ENCODE measurements at regions of chr6 and their contacts with region 1.

Region 1: DNA sequence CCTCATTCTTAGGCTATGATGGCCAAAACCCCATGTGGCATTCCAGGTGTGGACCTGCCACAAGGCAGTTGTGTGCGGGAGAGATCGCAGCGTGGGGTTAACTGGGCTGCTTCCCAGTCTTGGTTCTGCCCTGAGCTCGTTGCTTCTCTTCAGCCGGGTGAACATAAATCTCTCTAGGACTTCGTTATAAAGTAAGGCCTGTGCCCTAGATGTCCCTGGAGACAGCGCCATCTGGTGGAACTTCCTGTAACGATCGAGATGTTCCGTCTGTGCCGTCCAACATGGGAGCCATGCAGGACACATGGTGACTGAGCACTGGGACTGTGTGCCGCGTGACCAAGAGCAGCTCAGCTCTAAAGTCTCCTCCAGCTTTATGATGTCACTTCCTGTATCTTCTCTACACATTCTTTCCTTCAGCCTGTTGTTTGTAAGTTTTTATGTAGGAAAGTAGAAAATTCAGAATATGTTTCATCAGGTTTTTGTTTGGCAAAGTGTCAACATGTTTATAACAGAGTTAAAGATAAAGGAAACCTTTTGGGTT is 26.8 kb upstream of the RPP40 start:
- H3K4me3 ChIP-seq: no peak overlapping the region
- H3K27ac ChIP-seq: no peak overlapping the region
- H3K4me1 ChIP-seq: peaks cover 3% of the 10 kb centered on the region; the same call in 1 of the 2 replicates
- CTCF ChIP-seq: 0 out of 2 replicates have a peak, but pooled peaks have one; percentile 38

Region 2: GRCh38 chr6:4314201-4314707 is 716.4 kb before region 1 on chr6:
- CTCF ChIA-PET with region 1: interaction called, 10 read pairs
- POLR2A ChIA-PET with region 1: no interaction called
- H3K4me3 ChIP-seq: no peak overlapping the region
- H3K27ac ChIP-seq: no peak overlapping the region
- H3K4me1 ChIP-seq: 0 out of 2 replicates have a peak, but pooled peaks cover under 1% of the 10 kb centered on the region
- CTCF ChIP-seq: no peak

Region 3: DNA sequence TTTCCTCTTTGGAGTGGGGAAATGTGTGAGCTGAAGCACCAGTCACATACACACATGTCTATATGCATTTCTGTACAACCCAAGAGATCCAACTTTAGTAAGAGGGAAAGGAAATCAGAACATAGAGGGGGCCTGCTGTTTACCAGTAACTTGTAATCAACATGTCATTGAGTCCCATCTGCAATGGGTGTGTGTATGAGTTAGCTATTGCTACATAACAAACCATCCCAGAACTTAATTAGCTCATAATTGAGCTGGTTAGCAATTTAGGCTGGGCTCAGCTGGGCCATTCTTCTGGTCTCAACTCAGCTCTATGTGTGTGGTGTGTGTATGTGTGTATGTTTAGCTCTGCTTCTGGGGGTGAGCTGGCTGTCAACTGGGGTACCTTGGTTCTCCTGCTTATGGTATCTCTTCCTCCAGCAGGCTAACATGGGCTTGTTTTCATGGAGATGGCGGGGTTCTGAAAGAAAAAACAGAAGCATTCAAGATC is 16.5 kb before region 1 on chr6:
- CTCF ChIA-PET with region 1: interaction called, 24 read pairs
- POLR2A ChIA-PET with region 1: no interaction called
- H3K4me3 ChIP-seq: no peak overlapping the region
- H3K27ac ChIP-seq: no peak overlapping the region
- H3K4me1 ChIP-seq: no peaks in the 10 kb centered on the region
- CTCF ChIP-seq: no peak

Region 4: GRCh38 chr6:5020142-5020541 is 10.5 kb before region 1 on chr6:
- CTCF ChIA-PET with region 1: interaction called, 24 read pairs
- POLR2A ChIA-PET with region 1: no interaction called
- H3K4me3 ChIP-seq: no peak overlapping the region
- H3K27ac ChIP-seq: no peak overlapping the region
- H3K4me1 ChIP-seq: no peaks in the 10 kb centered on the region
- CTCF ChIP-seq: no peak

Region 5: GRCh38 chr6:5041955-5042354 is 11.3 kb after region 1 on chr6:
- CTCF ChIA-PET with region 1: interaction called, 39 read pairs
- POLR2A ChIA-PET with region 1: no interaction called
- H3K4me3 ChIP-seq: no peak overlapping the region
- H3K27ac ChIP-seq: no peak overlapping the region
- H3K4me1 ChIP-seq: no peaks in the 10 kb centered on the region
- CTCF ChIP-seq: no peak

Region 6: DNA sequence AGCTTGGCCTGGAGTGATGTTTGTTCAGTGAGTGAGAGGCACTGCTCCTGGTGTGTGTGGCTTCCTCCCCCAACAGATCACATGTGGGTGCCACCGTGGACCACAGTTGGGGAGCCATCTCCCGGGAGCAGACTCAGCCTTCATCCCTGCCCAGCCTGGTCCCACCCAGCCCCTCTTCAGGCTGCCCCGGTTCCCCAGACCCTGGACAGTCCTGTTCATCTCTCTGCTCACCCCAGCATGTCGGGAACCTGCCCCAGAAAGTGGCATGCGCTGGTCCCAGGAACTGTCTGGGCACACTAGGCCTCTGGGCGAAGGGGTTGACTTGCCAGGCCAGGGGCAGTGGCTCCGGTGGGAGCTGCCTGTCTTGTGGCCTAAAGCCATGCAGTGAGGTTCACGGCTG is 33.0 kb after region 1 on chr6:
- CTCF ChIA-PET with region 1: no interaction called
- POLR2A ChIA-PET with region 1: no interaction called
- H3K4me3 ChIP-seq: no peak overlapping the region
- H3K27ac ChIP-seq: no peak overlapping the region
- H3K4me1 ChIP-seq: no peaks in the 10 kb centered on the region
- CTCF ChIP-seq: no peak

Region 7: DNA sequence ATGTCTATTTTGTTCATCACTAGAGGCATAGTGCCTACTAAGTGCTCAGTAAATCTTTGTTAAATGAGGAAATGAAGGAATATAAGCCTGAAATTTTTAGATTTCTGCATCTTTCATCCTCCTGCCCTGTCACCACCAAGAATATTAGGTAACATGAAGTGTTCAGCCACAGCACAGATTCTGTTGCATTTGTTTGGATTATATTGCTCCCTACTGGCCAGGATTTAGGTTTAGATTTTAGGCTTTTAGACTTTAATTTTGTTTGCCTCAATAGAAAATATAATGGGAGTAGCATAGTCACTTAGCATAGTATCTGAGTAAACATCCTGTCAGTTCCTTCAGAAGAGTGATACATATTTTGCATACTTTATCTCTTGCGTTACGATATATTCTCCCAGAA is 244.8 kb after region 1 on chr6:
- CTCF ChIA-PET with region 1: no interaction called
- POLR2A ChIA-PET with region 1: no interaction called
- H3K4me3 ChIP-seq: no peak overlapping the region
- H3K27ac ChIP-seq: no peak overlapping the region
- H3K4me1 ChIP-seq: no peaks in the 10 kb centered on the region
- CTCF ChIP-seq: no peak

Measured in HEK293 (cell line).